Activated CD4-positive, alpha-beta memory T cell treated with anti-CD3 and anti-CD28 coated beads for 36 hours (primary cell): ENCODE measurements at regions of chr5 and their contacts with region 1.

Region 1: GRCh38 chr5:139968547-139969261 is 74.4 kb downstream of the NRG2 start:
- DNase-seq: peak; percentile 92
- H3K4me3 Mint-ChIP-seq: no peak overlapping the region
- H3K27ac Mint-ChIP-seq: no peak overlapping the region
- H3K4me1 Mint-ChIP-seq: no peaks in the 10 kb centered on the region
- H3K27me3 Mint-ChIP-seq: peaks cover 4% of the 10 kb centered on the region

Region 2: DNA sequence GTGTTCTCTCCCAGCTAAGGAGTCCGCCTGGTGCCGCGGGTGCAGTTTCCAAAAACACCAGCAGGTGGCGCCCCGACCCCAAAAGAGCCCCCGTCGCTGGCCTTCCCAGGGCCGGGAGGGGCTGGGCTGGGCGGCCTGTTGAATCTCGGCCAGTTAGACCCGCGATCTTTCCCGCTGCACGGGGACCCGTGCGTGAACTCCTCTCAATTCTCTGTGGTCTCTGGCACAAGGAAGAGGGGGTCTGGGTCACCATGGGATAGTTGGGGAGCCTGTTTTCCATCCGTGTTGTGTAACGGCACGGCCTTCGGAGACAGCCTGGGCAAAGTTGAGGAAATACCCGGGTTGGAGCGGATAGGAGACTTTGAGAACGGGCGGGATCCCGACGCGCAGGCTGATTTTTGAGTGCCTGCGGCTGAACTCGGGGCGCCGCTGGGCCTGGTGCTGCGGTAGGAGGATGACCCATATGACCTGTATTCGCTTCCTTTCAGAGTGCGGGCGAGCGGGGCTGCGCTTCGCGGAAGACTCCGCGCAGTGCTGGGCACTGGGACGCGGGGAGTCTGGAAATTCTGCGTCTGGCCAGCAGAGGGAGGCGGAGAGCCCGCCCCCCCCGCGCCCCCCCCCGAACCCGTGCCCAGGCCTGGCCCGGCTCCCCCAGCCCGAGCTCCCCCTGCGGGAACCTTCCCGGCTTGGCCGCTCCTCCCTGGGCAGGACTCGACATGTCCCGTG is 181.0 kb before region 1 on chr5:
- CTCF ChIA-PET with region 1: interaction called, 296 read pairs
- POLR2A ChIA-PET with region 1: no interaction called
- intact Hi-C with region 1: loop called (anchors 1 kb)
- DNase-seq: peak; percentile 90
- H3K4me3 Mint-ChIP-seq: peak overlapping the region; percentile 78
- H3K27ac Mint-ChIP-seq: no peak overlapping the region
- H3K4me1 Mint-ChIP-seq: peaks cover 4% of the 10 kb centered on the region
- H3K27me3 Mint-ChIP-seq: peaks cover 14% of the 10 kb centered on the region

Region 3: DNA sequence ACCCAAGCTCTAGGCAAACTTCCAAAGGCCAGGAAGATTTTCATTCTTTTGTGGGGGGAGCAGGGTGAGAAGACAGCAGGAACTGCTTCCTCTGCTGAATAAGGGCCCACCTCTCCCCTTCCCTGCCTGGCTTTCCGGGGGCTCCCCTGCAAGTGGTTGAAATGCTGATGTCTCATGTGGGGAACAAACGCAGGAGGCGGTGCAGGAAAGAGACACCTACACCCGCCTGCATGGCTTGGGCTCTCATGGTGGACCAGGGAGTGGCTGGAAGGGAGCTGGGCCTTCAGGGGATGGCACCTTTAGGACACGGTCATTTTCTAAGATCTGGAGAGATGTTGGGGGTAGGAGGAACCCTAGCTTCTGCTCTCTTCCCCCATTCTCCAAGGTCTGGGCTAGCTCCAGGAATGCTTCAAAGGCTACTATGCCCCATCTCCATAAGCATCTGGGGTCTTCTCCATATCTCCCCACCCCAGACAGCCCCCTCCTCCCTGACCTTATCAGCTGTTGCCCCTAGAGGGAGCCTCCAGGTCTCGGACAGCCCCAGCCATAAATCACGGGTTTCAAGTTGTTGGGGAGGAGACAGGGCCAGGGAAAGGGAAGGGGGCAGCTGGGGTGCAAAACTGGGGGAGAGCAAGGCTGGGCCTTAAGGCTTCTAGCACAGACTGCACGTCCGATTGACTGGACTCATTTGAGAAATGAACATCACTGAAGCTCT is 96.5 kb before region 1 on chr5:
- CTCF ChIA-PET with region 1: interaction called, 14 read pairs
- POLR2A ChIA-PET with region 1: no interaction called
- intact Hi-C with region 1: no loop called
- DNase-seq: no peak
- H3K4me3 Mint-ChIP-seq: no peak overlapping the region
- H3K27ac Mint-ChIP-seq: no peak overlapping the region
- H3K4me1 Mint-ChIP-seq: no peaks in the 10 kb centered on the region
- H3K27me3 Mint-ChIP-seq: peaks cover 6% of the 10 kb centered on the region

Region 4: DNA sequence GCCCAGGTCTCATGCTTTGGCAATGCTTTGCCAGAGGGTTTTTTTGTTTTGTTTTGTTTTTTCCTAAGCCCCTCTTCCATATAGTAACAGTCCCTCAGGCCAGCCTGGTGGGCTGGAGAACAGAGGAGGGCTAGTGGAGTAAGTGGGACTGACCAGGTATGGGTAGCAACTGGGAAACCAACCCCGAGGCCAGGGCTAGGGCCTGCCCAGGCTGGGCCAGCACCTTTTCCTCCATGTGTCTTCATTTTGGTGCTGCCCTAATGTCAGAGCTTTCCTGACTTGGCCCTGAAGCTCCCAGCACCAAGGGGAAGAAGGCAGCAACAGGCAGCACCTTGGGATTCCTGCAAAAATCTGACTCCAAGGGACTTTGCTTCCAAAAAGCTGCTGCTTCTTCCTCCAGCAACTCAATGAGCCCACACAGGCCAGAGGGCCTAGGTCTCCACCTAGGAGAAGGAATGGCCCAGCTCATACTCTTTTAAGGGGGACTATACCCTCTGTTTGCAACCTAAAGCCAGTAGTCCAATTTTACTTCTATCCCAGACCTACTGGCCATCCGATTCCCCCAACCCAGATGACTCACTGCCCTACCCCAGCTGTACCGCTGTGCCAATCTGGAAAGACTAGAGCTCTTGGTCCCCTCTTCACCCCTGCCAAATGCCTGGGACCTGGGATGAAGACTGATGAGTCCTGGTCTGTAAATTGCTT is 68.0 kb before region 1 on chr5:
- CTCF ChIA-PET with region 1: interaction called, 21 read pairs
- POLR2A ChIA-PET with region 1: no interaction called
- intact Hi-C with region 1: no loop called
- DNase-seq: no peak
- H3K4me3 Mint-ChIP-seq: no peak overlapping the region
- H3K27ac Mint-ChIP-seq: no peak overlapping the region
- H3K4me1 Mint-ChIP-seq: peaks cover 4% of the 10 kb centered on the region
- H3K27me3 Mint-ChIP-seq: peaks cover 32% of the 10 kb centered on the region

Region 5: DNA sequence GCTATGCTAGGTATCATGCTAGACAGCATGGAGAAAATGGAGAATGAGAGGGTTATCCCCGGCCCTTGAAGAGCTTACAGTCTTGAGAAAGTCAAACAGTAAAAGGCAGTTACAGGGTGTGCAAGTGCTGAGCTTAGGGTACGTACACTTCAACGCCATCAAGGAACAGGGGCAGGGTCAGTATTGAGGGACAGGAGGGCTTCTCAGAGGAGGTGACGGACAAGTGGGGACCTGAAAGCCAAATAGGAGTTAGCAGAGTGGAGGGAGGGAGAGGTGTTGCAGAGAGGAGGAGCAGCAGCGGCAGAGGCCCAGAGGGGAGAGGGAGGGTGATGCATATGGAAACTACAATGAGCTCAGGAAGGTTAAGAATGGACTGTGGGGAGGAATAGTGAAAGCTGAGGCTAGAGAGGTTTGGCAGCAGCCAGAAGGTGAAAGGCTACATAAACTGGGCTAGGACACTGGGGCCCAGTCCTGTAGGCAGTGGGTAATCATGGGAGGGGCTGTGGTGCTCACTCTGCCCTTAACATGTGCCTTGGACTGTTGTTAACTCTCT is 13.6 kb before region 1 on chr5:
- CTCF ChIA-PET with region 1: interaction called, 42 read pairs
- POLR2A ChIA-PET with region 1: no interaction called
- intact Hi-C with region 1: no loop called
- DNase-seq: no peak
- H3K4me3 Mint-ChIP-seq: no peak overlapping the region
- H3K27ac Mint-ChIP-seq: no peak overlapping the region
- H3K4me1 Mint-ChIP-seq: no peaks in the 10 kb centered on the region
- H3K27me3 Mint-ChIP-seq: peaks cover 3% of the 10 kb centered on the region

Region 6: GRCh38 chr5:140011297-140011802 is 42.6 kb after region 1 on chr5:
- CTCF ChIA-PET with region 1: interaction called, 10 read pairs
- POLR2A ChIA-PET with region 1: no interaction called
- intact Hi-C with region 1: no loop called
- DNase-seq: no peak
- H3K4me3 Mint-ChIP-seq: no peak overlapping the region
- H3K27ac Mint-ChIP-seq: no peak overlapping the region
- H3K4me1 Mint-ChIP-seq: no peaks in the 10 kb centered on the region
- H3K27me3 Mint-ChIP-seq: peaks cover 6% of the 10 kb centered on the region